ENCODE measurements at regions of chr11 and their contacts with region 1.

Region 1: DNA sequence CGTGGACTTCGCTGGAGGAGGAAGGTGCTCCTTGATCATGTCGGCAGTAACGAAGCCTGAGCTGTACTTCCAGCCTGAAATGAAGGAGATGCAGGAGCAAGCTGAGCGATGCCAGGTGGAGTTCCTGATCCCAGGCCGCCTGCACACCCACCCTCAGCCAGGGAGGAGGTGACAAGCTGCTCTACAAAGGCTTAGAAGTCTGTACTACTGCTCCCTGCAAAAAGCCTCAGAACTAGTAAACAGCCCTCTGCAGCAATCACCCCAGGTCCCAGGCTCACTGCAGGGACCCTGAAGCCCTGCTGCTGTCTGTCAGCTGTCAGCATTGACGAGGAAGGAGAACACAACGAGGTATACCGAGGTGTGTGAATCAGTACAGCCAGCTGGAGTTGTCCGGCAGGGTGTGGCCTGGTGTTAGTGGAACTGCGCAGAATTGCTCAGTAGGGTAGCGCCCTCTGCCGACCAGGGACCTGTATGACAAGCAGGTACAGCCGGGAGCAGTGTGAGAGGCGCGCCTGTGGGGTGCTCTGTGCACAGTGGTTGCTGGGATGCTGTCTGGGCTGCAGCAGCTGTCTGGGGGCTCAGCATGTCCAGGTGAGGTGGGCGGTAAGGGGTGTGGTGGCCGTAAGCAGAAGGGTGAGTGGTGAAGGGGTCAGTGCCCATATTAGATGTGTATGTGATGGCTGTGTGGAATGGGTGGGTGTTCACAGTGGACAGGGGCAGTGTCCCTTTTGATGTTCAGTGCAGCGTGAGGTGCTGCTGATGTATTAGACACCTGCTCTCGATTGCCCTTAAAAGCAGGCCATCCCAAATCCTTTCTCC is 7.6 kb downstream of the CYB5R2 start:
- DNase-seq: peak; percentile 63 to 84
- H3K4me3 ChIP-seq: no peak overlapping the region
- H3K27ac ChIP-seq: no peak overlapping the region
- H3K4me1 ChIP-seq: peaks cover 0 to 4% (median 0%) of the 10 kb centered on the region in 4 donors
- H3K27me3 ChIP-seq: no peaks in the 10 kb centered on the region
- CTCF ChIP-seq: peak; percentile 79 to 83

Region 2: GRCh38 chr11:7473717-7474116 is 192.0 kb before region 1 on chr11:
- intact Hi-C with region 1: no loop called
- DNase-seq: no peak
- H3K4me3 ChIP-seq: no peak overlapping the region
- H3K27ac ChIP-seq: no peak overlapping the region
- H3K4me1 ChIP-seq: no peaks in the 10 kb centered on the region
- H3K27me3 ChIP-seq: no peaks in the 10 kb centered on the region
- CTCF ChIP-seq: no peak

Region 3: GRCh38 chr11:7513234-7514098 is 152.2 kb before region 1 on chr11 and contains the start of gene PPFIBP2:
- intact Hi-C with region 1: loop called (anchors 5 kb)
- DNase-seq: peak; percentile 79 to 92
- H3K4me3 ChIP-seq: peak within 1 kb of the TSS; percentile 69 to 72
- H3K27ac ChIP-seq: peak within 1 kb of the TSS; percentile 84 to 87
- H3K4me1 ChIP-seq: peaks cover 0 to 27% (median 23%) of the 10 kb centered on the region in 4 donors
- H3K27me3 ChIP-seq: no peaks in the 10 kb centered on the region
- CTCF ChIP-seq: peak; percentile 49 to 55

Region 4: GRCh38 chr11:7555052-7555699 is 110.5 kb before region 1 on chr11:
- intact Hi-C with region 1: no loop called
- DNase-seq: no peak
- H3K4me3 ChIP-seq: no peak overlapping the region
- H3K27ac ChIP-seq: no peak overlapping the region
- H3K4me1 ChIP-seq: no peaks in the 10 kb centered on the region
- H3K27me3 ChIP-seq: no peaks in the 10 kb centered on the region
- CTCF ChIP-seq: no peak

Region 5: DNA sequence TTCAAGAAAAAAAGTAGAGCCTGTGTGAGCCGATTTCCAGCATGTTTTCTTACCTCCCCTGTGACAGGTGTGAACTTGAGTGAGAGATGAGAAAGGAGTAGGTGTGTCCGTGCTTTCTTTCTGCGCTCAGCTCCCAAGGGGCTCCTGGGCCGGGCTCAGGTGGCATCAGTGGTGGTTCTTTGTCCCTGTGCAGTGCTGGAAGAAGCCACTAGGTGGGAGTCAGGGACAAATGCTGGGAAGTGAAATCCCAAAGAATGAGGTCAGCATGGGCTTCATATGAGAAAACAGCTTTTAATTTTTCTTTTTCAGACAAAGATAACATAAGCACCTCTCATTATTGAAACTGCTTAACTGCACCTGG is 94.1 kb before region 1 on chr11:
- intact Hi-C with region 1: loop called (anchors 1 kb)
- DNase-seq: peak; percentile 71 to 82
- H3K4me3 ChIP-seq: no peak overlapping the region
- H3K27ac ChIP-seq: peak overlapping the region; percentile 13 to 58
- H3K4me1 ChIP-seq: peaks cover 13 to 37% (median 24%) of the 10 kb centered on the region in 4 donors
- H3K27me3 ChIP-seq: no peaks in the 10 kb centered on the region
- CTCF ChIP-seq: peak; percentile 94 to 97

Region 6: DNA sequence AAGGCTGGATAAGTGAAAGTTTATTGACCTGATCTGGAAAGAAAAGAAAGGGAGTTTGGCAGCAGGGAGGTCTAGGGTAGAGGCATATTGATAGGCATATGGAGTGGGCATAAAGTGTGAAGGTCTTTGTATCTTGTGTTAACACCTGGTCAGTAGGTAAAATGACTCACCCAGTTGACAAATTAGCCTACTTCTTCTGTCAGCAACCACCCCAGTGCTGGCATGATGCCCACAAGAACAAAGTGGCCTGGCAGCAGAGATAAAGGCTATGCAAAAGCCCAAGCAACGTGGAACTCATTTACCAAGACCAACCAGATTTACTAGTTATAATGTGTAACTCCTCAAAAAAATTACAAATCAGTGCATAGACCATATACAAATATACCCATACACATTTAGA is 270.9 kb after region 1 on chr11:
- intact Hi-C with region 1: no loop called
- DNase-seq: no peak
- H3K4me3 ChIP-seq: no peak overlapping the region
- H3K27ac ChIP-seq: no peak overlapping the region
- H3K4me1 ChIP-seq: no peaks in the 10 kb centered on the region
- H3K27me3 ChIP-seq: no peaks in the 10 kb centered on the region
- CTCF ChIP-seq: no peak

Measured in tibial artery (tissue), 4 donors.